ENCODE measurements at regions of chr11 and their contacts with region 1.

Region 1: GRCh38 chr11:128552783-128553661 is 34.3 kb downstream of the ETS1 start:
- DNase-seq: peak; percentile 95
- ATAC-seq: peak; percentile 79
- H3K4me3 ChIP-seq: peak overlapping the region; percentile 69
- H3K27ac ChIP-seq: peak overlapping the region; percentile 100
- H3K4me1 ChIP-seq: peaks cover 50% of the 10 kb centered on the region
- H3K27me3 ChIP-seq: no peaks in the 10 kb centered on the region
- CTCF ChIP-seq: no peak
- EP300 ChIP-seq: peak in 1 of 2 experiments; percentile 35; a peak in 2 of 4 replicates
- POLR2A ChIP-seq: peak; percentile 82
- RAD21 ChIP-seq: 0 out of 2 replicates have a peak, but pooled peaks have one; percentile 2

Region 2: DNA sequence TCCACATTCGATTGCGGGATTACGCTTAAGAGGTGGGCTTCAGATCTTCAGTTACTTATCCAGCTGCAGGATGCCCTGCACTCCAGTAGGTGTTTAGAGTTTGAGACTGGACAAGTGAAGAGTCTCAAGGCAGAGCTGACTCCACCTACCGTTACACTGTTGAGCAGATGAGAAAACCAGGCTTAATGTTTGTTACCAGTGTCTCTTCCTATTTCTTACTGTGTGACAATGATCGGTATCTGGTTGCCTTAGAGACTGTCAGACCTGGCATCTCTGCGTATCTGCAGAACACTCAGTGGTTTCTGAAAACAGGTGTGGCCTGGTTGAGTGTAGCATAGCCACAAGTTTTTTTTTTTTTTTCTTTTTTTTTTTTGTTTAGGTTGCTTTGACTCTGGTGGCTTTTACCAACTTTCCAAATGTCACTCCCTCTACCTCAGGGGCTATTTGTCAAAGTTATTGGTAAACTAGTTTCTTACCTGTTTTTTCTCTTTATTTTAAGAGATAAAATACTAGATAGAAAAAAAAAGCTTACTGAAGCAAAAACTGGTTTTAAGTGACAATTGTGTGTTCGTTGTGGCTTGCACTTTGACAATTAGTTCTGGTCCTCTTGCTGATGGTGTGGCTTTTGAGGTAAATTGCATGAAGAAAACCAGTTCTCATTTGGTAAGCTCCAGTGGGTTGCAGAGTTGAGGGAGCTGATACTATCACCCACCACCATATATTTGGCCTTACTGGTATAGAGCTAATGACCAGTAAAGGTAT is 250.4 kb before region 1 on chr11:
- CTCF ChIA-PET with region 1: interaction called, 10 read pairs
- POLR2A ChIA-PET with region 1: interaction called, 5 read pairs
- RAD21 ChIA-PET with region 1: interaction called, 6 read pairs
- SMC1A ChIA-PET with region 1: interaction called, 36 read pairs
- in situ Hi-C with region 1: no loop called
- intact Hi-C with region 1: loop called (anchors 1 kb)
- DNase-seq: peak; percentile 82
- ATAC-seq: peak; percentile 89
- H3K4me3 ChIP-seq: no peak overlapping the region
- H3K27ac ChIP-seq: peak overlapping the region; percentile 35; the same call in 1 of the 2 replicates
- H3K4me1 ChIP-seq: peaks cover 62% of the 10 kb centered on the region
- H3K27me3 ChIP-seq: no peaks in the 10 kb centered on the region
- CTCF ChIP-seq: 0 out of 6 replicates have a peak, but pooled peaks of 1 of the 3 experiments have one; percentile 11
- EP300 ChIP-seq: peak; percentile 6 to 8; a peak in 1 of 4 replicates
- POLR2A ChIP-seq: no peak
- RAD21 ChIP-seq: no peak

Region 3: DNA sequence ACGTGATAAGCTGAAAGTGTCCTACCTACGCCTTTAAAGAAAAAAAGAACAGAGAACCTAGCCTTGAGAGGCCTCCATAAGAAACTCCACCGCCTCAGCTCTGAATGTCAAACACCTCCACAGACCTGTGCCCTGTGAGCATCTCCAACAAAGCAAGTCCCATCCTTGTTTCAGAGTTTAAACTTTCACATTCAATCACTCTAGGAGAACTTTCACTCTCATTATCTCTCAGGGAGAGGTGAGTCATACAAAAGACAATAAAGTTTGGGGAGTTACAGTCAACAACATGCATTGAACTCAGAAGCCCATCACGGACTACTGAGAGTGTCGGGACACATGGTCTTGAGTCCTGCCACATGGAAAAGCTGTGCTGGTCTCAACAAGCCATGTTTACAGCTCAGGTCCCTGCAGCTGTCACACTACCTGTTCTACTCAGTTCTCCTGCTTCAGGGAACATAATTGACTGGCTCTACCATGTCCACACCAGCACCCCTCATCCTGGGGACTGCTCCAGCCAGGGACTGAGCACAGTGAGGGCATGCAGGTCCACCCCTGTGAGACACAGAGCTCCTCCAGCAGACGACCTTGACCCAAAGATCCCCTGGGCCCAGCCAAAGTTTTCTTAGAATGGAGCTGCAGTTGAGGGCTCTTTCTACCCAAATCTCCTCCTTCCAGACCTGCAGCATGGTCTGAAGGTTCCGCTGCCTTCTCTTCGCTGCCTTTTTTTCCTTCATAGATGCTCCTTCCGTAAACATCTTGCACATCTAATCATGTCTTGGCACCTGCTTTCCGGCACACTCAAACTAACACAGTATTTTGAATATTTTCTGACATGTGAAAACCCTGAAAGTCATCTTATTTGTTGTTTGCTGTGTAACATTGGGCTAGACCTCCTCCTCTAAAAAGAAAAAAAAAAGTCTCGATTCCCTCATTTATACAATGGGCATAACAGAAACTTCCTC is 80.6 kb before region 1 on chr11:
- CTCF ChIA-PET with region 1: interaction called, 7 read pairs
- POLR2A ChIA-PET with region 1: interaction called, 15 read pairs
- RAD21 ChIA-PET with region 1: interaction called, 64 read pairs
- SMC1A ChIA-PET with region 1: interaction called, 37 read pairs
- in situ Hi-C with region 1: loop called (anchors 5 kb)
- intact Hi-C with region 1: loop called (anchors 1 kb)
- DNase-seq: peak; percentile 93
- ATAC-seq: peak; percentile 78
- H3K4me3 ChIP-seq: peak overlapping the region; percentile 41; the same call in 1 of the 2 replicates
- H3K27ac ChIP-seq: peak overlapping the region; percentile 91
- H3K4me1 ChIP-seq: peaks cover 92% of the 10 kb centered on the region
- H3K27me3 ChIP-seq: no peaks in the 10 kb centered on the region
- CTCF ChIP-seq: no peak
- EP300 ChIP-seq: peak; percentile 76 to 78; a peak in 3 of 4 replicates
- POLR2A ChIP-seq: peak; percentile 75
- RAD21 ChIP-seq: peak; percentile 25; the same call in 1 of the 2 replicates

Region 4: DNA sequence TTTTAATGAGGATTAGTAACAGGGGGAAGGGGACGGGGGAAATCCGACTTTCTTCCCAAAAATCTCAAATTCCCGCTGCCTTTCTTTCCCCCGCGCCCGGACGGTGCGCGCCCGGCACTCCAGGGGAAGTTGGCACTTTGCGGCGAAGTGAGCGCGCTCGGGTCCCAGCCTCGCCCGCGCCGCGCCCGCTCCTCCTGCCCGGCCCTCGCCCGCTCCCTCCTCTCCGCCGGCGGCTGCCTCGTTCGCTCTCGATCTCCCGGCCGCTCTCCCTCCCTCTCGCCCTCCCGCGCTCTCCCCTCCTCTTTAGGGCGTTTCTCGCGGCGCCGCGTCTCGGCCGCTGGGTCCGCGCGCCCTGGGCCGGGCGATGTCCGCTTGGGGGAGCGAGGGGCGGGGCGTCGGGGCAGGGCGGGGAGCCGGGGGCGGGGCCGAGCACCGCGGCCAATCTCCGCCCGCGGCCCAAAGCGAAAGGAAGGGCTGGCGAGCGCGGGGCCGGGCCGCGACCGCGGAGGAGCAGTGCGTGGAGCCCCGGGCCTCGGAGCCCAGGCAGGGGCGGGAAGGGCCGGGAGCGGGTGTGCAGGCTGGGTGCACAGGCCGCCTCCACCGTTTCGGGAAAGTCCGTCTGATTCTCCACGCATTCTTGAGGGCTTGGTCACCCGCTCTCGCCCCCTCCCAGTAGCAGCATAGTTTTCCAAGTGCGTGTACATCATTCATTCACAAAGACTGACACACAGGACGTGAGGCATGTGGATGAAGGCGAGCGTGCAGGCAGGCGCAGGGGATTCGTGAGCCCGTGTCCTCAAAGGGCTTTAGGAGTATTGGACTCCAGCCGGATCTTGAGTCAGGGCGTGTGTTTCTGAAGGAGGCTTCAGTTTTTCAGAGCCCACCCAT is 30.7 kb before region 1 on chr11:
- CTCF ChIA-PET with region 1: interaction called, 21 read pairs
- POLR2A ChIA-PET with region 1: interaction called, 41 read pairs
- RAD21 ChIA-PET with region 1: interaction called, 93 read pairs
- SMC1A ChIA-PET with region 1: interaction called, 56 read pairs
- in situ Hi-C with region 1: no loop called
- intact Hi-C with region 1: loop called (anchors 1 kb)
- DNase-seq: peak; percentile 59
- ATAC-seq: peak; percentile 85
- H3K4me3 ChIP-seq: peak overlapping the region; percentile 96
- H3K27ac ChIP-seq: peak overlapping the region; percentile 96
- H3K4me1 ChIP-seq: peaks cover 17% of the 10 kb centered on the region
- H3K27me3 ChIP-seq: no peaks in the 10 kb centered on the region
- CTCF ChIP-seq: no peak
- EP300 ChIP-seq: no peak
- POLR2A ChIP-seq: peak; percentile 97
- RAD21 ChIP-seq: 0 out of 2 replicates have a peak, but pooled peaks have one; percentile 9

Region 5: GRCh38 chr11:128603752-128604414 is 50.9 kb after region 1 on chr11:
- CTCF ChIA-PET with region 1: interaction called, 16 read pairs
- POLR2A ChIA-PET with region 1: interaction called, 3 read pairs
- RAD21 ChIA-PET with region 1: interaction called, 40 read pairs
- SMC1A ChIA-PET with region 1: interaction called, 48 read pairs
- in situ Hi-C with region 1: loop called (anchors 5 kb)
- intact Hi-C with region 1: no loop called
- DNase-seq: peak; percentile 44
- ATAC-seq: peak; percentile 91
- H3K4me3 ChIP-seq: no peak overlapping the region
- H3K27ac ChIP-seq: no peak overlapping the region
- H3K4me1 ChIP-seq: peaks cover 6% of the 10 kb centered on the region
- H3K27me3 ChIP-seq: no peaks in the 10 kb centered on the region
- CTCF ChIP-seq: peak; percentile 5 to 68 (median 38); a peak in 5 of 6 replicates
- EP300 ChIP-seq: no peak
- POLR2A ChIP-seq: no peak
- RAD21 ChIP-seq: peak; percentile 87

Region 6: DNA sequence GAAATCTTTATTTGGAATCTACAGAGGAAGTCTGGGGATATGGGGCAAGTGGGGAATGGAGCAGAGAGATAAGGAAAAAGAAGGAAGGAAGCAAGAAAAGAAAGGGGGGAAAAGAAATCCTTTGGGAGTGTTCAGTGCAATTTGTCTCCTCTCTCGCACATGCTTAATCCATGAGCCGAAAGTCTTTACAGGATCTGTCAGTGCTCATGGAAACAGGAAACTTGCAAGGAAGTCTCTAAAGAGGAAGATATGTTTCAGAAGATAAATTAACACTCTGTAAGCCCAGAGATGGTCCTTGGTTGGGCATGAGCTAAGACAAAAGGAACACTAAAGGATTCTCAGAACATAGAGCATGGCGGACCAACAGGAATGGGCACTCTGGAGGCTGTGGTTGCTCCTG is 92.9 kb after region 1 on chr11:
- CTCF ChIA-PET with region 1: no interaction called
- POLR2A ChIA-PET with region 1: no interaction called
- RAD21 ChIA-PET with region 1: no interaction called
- SMC1A ChIA-PET with region 1: no interaction called
- in situ Hi-C with region 1: no loop called
- intact Hi-C with region 1: no loop called
- DNase-seq: no peak
- ATAC-seq: no peak
- H3K4me3 ChIP-seq: no peak overlapping the region
- H3K27ac ChIP-seq: no peak overlapping the region
- H3K4me1 ChIP-seq: no peaks in the 10 kb centered on the region
- H3K27me3 ChIP-seq: peaks cover 1 to 6% of the 10 kb centered on the region in 2 experiments; a peak in 2 of 4 replicates
- CTCF ChIP-seq: no peak
- EP300 ChIP-seq: no peak
- POLR2A ChIP-seq: no peak
- RAD21 ChIP-seq: no peak

Region 7: DNA sequence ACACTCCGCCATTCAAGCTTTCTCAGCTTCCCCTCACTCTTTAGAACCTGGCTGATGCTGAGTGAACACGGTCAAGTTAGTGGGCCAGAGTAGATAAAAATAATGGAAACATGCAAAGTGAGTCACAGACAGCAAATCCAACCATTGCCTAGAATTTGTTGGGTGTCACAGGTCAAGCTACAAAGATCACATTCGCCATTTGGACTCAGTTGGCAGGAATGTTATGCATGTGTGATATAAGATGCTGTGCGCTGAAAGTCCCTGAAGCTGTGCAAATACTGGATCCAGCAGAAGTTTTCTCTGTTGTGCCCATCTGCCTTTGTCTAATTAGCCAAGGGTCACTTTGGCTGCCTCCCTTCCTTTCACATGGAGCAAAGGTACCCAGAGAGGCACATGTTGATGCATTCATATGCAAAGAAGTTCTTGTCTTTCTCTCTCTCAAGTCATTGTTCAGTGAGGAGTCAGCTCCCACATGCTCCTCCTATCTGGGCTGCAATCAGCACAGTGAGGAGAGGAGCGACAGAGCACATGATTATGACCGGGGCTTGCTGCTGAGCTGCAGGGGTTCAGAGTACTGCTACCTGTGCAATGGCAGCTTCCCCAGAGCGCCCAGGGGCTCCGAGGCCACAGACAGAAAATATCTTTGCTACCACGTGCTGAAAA is 180.5 kb after region 1 on chr11:
- CTCF ChIA-PET with region 1: no interaction called
- POLR2A ChIA-PET with region 1: no interaction called
- RAD21 ChIA-PET with region 1: no interaction called
- SMC1A ChIA-PET with region 1: interaction called, 8 read pairs
- in situ Hi-C with region 1: no loop called
- intact Hi-C with region 1: loop called (anchors 2 kb)
- DNase-seq: no peak
- ATAC-seq: peak; percentile 55
- H3K4me3 ChIP-seq: peak overlapping the region; percentile 24; the same call in 1 of the 2 replicates
- H3K27ac ChIP-seq: peak overlapping the region; percentile 91
- H3K4me1 ChIP-seq: peaks cover 89% of the 10 kb centered on the region
- H3K27me3 ChIP-seq: no peaks in the 10 kb centered on the region
- CTCF ChIP-seq: no peak
- EP300 ChIP-seq: no peak
- POLR2A ChIP-seq: 0 out of 2 replicates have a peak, but pooled peaks have one; percentile 31
- RAD21 ChIP-seq: no peak

Region 8: GRCh38 chr11:129023970-129024676 is 471.1 kb after region 1 on chr11:
- CTCF ChIA-PET with region 1: no interaction called
- POLR2A ChIA-PET with region 1: no interaction called
- RAD21 ChIA-PET with region 1: no interaction called
- SMC1A ChIA-PET with region 1: no interaction called
- in situ Hi-C with region 1: no loop called
- intact Hi-C with region 1: no loop called
- DNase-seq: no peak
- ATAC-seq: peak; percentile 36; the same call in 2 of the 3 replicates
- H3K4me3 ChIP-seq: no peak overlapping the region
- H3K27ac ChIP-seq: no peak overlapping the region
- H3K4me1 ChIP-seq: no peaks in the 10 kb centered on the region
- H3K27me3 ChIP-seq: no peaks in the 10 kb centered on the region
- CTCF ChIP-seq: no peak
- EP300 ChIP-seq: no peak
- POLR2A ChIP-seq: no peak
- RAD21 ChIP-seq: no peak